Caco-2 (cell line): ENCODE measurements at regions of chr2 and their contacts with region 1.

Region 1: GRCh38 chr2:45643543-45644542 is 7.6 kb upstream of the PRKCE start:
- DNase-seq: peak; percentile 55 to 84
- H3K4me3 ChIP-seq: peak overlapping the region; percentile 31
- H3K4me3 Mint-ChIP-seq: peak overlapping the region; percentile 67
- H3K27ac Mint-ChIP-seq: no peak overlapping the region
- H3K4me1 ChIP-seq: no peaks in the 10 kb centered on the region
- H3K4me1 Mint-ChIP-seq: peaks cover 10% of the 10 kb centered on the region
- H3K27me3 ChIP-seq: no peaks in the 10 kb centered on the region
- H3K27me3 Mint-ChIP-seq: peaks cover 10% of the 10 kb centered on the region
- CTCF ChIP-seq: peak; percentile 69 to 96

Region 2: DNA sequence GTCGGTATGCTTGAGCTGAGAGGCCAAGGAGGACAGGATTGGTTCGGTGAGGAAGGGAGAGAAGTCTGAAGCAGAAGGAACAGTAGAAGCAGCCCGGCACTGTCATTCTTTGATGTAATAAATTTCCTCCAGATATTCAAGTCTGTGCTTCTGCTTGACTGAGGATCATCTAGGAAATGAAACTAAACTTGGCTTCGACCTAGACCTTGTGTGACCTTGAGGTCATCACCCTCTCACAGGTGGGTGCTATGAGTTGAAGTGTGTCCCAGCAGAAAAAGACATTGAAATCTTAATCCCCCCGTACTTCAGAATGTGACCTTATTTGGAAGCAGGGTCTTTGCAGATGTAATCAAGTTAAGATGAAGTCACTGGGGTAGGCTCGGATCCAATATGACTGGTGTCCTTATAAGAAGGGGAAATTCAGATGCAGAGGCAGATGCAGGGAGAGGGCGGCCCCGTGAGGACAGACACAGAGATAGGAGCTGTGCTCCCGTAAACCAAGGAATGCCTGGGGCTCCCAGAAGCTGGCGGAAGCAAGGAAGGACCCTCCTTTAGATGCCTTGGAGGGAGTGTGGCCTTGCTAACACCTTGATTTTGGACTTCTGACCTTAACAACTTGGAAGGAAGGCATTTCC is 56.7 kb after region 1 on chr2:
- CTCF ChIA-PET with region 1: no interaction called
- POLR2A ChIA-PET with region 1: no interaction called
- intact Hi-C with region 1: loop called (anchors 2 kb)
- DNase-seq: peak in 1 of 2 experiments; percentile 19
- H3K4me3 ChIP-seq: no peak overlapping the region
- H3K4me3 Mint-ChIP-seq: no peak overlapping the region
- H3K27ac Mint-ChIP-seq: no peak overlapping the region
- H3K4me1 ChIP-seq: no peaks in the 10 kb centered on the region
- H3K4me1 Mint-ChIP-seq: no peaks in the 10 kb centered on the region
- H3K27me3 ChIP-seq: no peaks in the 10 kb centered on the region
- H3K27me3 Mint-ChIP-seq: peaks cover 6% of the 10 kb centered on the region
- CTCF ChIP-seq: no peak

Region 3: GRCh38 chr2:45712570-45712969 is 68.7 kb after region 1 on chr2:
- CTCF ChIA-PET with region 1: interaction called, 7 read pairs
- POLR2A ChIA-PET with region 1: no interaction called
- intact Hi-C with region 1: loop called (anchors 1 kb)
- DNase-seq: peak; percentile 21 to 51
- H3K4me3 ChIP-seq: no peak overlapping the region
- H3K4me3 Mint-ChIP-seq: no peak overlapping the region
- H3K27ac Mint-ChIP-seq: no peak overlapping the region
- H3K4me1 ChIP-seq: no peaks in the 10 kb centered on the region
- H3K4me1 Mint-ChIP-seq: no peaks in the 10 kb centered on the region
- H3K27me3 ChIP-seq: peaks cover 3% of the 10 kb centered on the region
- H3K27me3 Mint-ChIP-seq: no peaks in the 10 kb centered on the region
- CTCF ChIP-seq: peak in 1 of 2 experiments; percentile 17

Region 4: DNA sequence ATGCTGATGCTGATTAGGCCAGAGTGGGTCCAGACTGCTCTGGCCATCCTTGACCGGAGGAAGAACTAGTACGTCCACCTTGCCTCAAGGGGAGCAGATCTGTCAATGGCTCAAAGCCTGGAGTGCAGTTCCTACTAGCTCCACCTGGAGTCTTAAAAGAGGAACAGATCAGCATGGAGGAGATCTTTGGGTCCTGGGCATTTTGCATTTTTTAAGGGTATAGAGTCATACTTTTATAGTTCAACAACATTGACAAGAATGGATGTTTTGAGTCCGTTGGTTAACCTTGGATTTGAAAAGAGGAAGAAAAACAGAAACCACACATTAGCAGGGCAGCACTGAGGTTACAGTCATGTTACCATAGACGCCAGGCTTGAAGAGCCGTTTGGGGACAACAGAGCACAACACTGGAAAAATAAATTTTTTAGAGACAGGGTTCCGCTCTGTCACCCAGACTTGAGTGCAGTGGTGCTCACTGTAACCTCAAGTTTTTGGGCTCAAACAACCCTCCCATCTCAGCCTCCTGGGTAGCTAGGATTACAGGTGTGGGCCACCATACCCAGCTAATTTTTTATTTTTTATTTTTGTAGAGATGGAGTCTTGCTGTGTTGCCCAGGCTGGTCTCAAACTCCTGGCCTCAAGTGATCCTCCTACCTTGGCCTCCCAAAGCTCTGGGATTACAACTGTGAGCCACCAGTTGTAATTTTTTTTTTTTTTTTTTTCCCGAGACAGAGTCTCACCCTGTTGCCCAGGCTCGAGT is 86.1 kb after region 1 on chr2:
- CTCF ChIA-PET with region 1: interaction called, 3 read pairs
- POLR2A ChIA-PET with region 1: no interaction called
- intact Hi-C with region 1: loop called (anchors 1 kb)
- DNase-seq: peak in 1 of 2 experiments; percentile 44
- H3K4me3 ChIP-seq: no peak overlapping the region
- H3K4me3 Mint-ChIP-seq: no peak overlapping the region
- H3K27ac Mint-ChIP-seq: no peak overlapping the region
- H3K4me1 ChIP-seq: no peaks in the 10 kb centered on the region
- H3K4me1 Mint-ChIP-seq: no peaks in the 10 kb centered on the region
- H3K27me3 ChIP-seq: no peaks in the 10 kb centered on the region
- H3K27me3 Mint-ChIP-seq: no peaks in the 10 kb centered on the region
- CTCF ChIP-seq: peak; percentile 16 to 49

Region 5: DNA sequence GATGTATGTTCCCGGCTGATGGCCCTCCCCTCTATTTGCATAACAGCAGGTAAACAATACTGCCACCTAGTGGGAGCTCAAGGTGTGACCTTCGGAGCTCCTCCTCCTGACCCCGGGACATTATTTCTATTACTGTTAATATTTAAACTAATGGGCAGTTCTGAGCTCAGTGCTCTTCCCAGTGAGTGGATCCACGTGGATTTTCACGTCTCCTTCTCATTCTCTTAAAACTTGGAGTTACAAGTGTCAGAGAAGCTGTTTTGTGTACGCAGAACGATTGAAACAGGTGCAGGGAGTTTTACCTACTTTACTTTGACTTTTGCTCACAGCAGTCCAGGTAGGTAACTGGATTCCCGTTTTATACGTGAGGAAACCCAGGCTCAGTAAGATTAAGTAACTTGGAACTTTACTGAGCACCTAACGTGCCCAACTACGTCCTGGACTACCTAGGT is 134.9 kb after region 1 on chr2:
- CTCF ChIA-PET with region 1: interaction called, 7 read pairs
- POLR2A ChIA-PET with region 1: no interaction called
- intact Hi-C with region 1: loop called (anchors 1 kb)
- DNase-seq: peak; percentile 77 to 83
- H3K4me3 ChIP-seq: no peak overlapping the region
- H3K4me3 Mint-ChIP-seq: no peak overlapping the region
- H3K27ac Mint-ChIP-seq: no peak overlapping the region
- H3K4me1 ChIP-seq: 0 out of 2 replicates have a peak, but pooled peaks cover 5% of the 10 kb centered on the region
- H3K4me1 Mint-ChIP-seq: no peaks in the 10 kb centered on the region
- H3K27me3 ChIP-seq: no peaks in the 10 kb centered on the region; the same call in 1 of the 2 replicates
- H3K27me3 Mint-ChIP-seq: no peaks in the 10 kb centered on the region
- CTCF ChIP-seq: peak; percentile 55 to 64

Region 6: DNA sequence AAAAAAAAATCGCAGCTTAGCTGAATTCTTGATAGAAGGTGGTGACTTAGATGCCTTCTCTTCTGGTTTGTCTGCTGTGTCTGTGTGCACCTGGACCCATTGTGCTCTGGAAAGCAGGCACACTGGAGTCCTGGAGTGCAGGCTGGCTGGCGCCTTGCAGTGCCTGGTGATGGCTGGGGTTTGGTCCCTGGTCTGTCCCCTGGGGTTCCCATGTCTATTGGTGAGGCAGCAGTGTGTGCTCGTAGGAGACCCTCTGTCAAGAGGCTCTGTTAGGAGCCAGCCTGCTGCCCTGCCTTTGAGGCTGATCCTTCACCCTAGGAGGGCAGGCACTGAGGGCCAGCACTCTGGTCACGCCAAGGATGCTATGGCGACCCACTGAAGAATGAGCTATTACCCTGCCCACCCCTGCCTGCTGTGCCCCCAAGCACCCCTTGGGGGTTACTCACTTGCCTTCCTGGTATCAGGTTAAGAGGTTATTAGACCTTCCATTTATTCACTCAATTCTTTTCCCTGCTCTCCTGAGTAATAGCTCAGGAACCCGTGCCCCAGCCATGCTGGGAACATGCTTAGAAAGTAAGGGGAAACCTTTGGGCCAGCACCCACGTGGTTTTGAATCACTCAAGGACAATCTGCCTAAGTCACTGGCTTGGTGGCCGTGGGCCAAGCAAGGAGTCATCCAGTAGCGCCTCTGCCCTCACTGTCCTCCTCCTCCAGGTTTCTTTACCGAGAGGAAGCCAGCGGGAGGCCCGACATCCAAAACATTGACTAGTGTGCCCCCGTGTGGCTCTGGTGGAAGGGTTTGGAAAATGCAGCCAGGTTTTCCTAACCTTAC is 292.2 kb after region 1 on chr2:
- CTCF ChIA-PET with region 1: no interaction called
- POLR2A ChIA-PET with region 1: no interaction called
- intact Hi-C with region 1: loop called (anchors 1 kb)
- DNase-seq: peak; percentile 85
- H3K4me3 ChIP-seq: no peak overlapping the region
- H3K4me3 Mint-ChIP-seq: no peak overlapping the region
- H3K27ac Mint-ChIP-seq: no peak overlapping the region
- H3K4me1 ChIP-seq: peaks cover 20% of the 10 kb centered on the region
- H3K4me1 Mint-ChIP-seq: peaks cover 20% of the 10 kb centered on the region
- H3K27me3 ChIP-seq: no peaks in the 10 kb centered on the region
- H3K27me3 Mint-ChIP-seq: no peaks in the 10 kb centered on the region
- CTCF ChIP-seq: peak; percentile 79 to 82

Region 7: GRCh38 chr2:45993476-45993991 is 349.7 kb after region 1 on chr2:
- CTCF ChIA-PET with region 1: no interaction called
- POLR2A ChIA-PET with region 1: no interaction called
- intact Hi-C with region 1: loop called (anchors 5 kb)
- DNase-seq: peak; percentile 71 to 82
- H3K4me3 ChIP-seq: no peak overlapping the region
- H3K4me3 Mint-ChIP-seq: no peak overlapping the region
- H3K27ac Mint-ChIP-seq: no peak overlapping the region
- H3K4me1 ChIP-seq: no peaks in the 10 kb centered on the region; the same call in 1 of the 2 replicates
- H3K4me1 Mint-ChIP-seq: peaks cover 12% of the 10 kb centered on the region
- H3K27me3 ChIP-seq: no peaks in the 10 kb centered on the region
- H3K27me3 Mint-ChIP-seq: no peaks in the 10 kb centered on the region
- CTCF ChIP-seq: peak; percentile 80 to 83